ENCODE measurements at regions of chr10 and their contacts with region 1.

Region 1: GRCh38 chr10:29392376-29393021 is 103.6 kb downstream of the LYZL1 start:
- DNase-seq: no peak
- ATAC-seq: peak; percentile 80
- H3K4me3 ChIP-seq: no peak overlapping the region
- H3K27ac ChIP-seq: no peak overlapping the region
- H3K4me1 ChIP-seq: no peaks in the 10 kb centered on the region
- H3K27me3 ChIP-seq: peaks cover 0 to 3% of the 10 kb centered on the region in 2 experiments; a peak in 2 of 4 replicates
- CTCF ChIP-seq: peak; percentile 55 to 77 (median 71)
- EP300 ChIP-seq: no peak
- POLR2A ChIP-seq: no peak
- RAD21 ChIP-seq: peak; percentile 50

Region 2: GRCh38 chr10:29239569-29240472 is 152.7 kb before region 1 on chr10:
- CTCF ChIA-PET with region 1: interaction called, 3 read pairs
- POLR2A ChIA-PET with region 1: no interaction called
- RAD21 ChIA-PET with region 1: no interaction called
- SMC1A ChIA-PET with region 1: no interaction called
- in situ Hi-C with region 1: no loop called
- intact Hi-C with region 1: loop called (anchors 1 kb)
- DNase-seq: no peak
- ATAC-seq: peak; percentile 78
- H3K4me3 ChIP-seq: no peak overlapping the region
- H3K27ac ChIP-seq: no peak overlapping the region
- H3K4me1 ChIP-seq: no peaks in the 10 kb centered on the region
- H3K27me3 ChIP-seq: no peaks in the 10 kb centered on the region
- CTCF ChIP-seq: peak; percentile 65 to 70 (median 69)
- EP300 ChIP-seq: no peak
- POLR2A ChIP-seq: no peak
- RAD21 ChIP-seq: peak; percentile 64

Region 3: GRCh38 chr10:29377333-29377961 is 15.1 kb before region 1 on chr10:
- CTCF ChIA-PET with region 1: interaction called, 12 read pairs
- POLR2A ChIA-PET with region 1: no interaction called
- RAD21 ChIA-PET with region 1: interaction called, 4 read pairs
- SMC1A ChIA-PET with region 1: interaction called, 4 read pairs
- in situ Hi-C with region 1: no loop called
- intact Hi-C with region 1: no loop called
- DNase-seq: no peak
- ATAC-seq: peak; percentile 39; the same call in 1 of the 3 replicates
- H3K4me3 ChIP-seq: no peak overlapping the region
- H3K27ac ChIP-seq: no peak overlapping the region
- H3K4me1 ChIP-seq: no peaks in the 10 kb centered on the region
- H3K27me3 ChIP-seq: peaks cover 0 to 2% of the 10 kb centered on the region in 2 experiments; a peak in 1 of 4 replicates
- CTCF ChIP-seq: peak; percentile 45 to 58 (median 47); a peak in 5 of 6 replicates
- EP300 ChIP-seq: no peak
- POLR2A ChIP-seq: no peak
- RAD21 ChIP-seq: peak; percentile 72